Activated naive CD4-positive, alpha-beta T cell treated with anti-CD3 and anti-CD28 coated beads for 36 hours (primary cell): ENCODE measurements at regions of chr6 and their contacts with region 1.

Region 1: GRCh38 chr6:16684896-16685554 is 76.2 kb downstream of the ATXN1 start:
- DNase-seq: peak; percentile 97
- H3K4me3 Mint-ChIP-seq: peak overlapping the region; percentile 20
- H3K27ac Mint-ChIP-seq: peak overlapping the region; percentile 44
- H3K4me1 Mint-ChIP-seq: peaks cover 74% of the 10 kb centered on the region
- H3K27me3 Mint-ChIP-seq: no peaks in the 10 kb centered on the region

Region 2: DNA sequence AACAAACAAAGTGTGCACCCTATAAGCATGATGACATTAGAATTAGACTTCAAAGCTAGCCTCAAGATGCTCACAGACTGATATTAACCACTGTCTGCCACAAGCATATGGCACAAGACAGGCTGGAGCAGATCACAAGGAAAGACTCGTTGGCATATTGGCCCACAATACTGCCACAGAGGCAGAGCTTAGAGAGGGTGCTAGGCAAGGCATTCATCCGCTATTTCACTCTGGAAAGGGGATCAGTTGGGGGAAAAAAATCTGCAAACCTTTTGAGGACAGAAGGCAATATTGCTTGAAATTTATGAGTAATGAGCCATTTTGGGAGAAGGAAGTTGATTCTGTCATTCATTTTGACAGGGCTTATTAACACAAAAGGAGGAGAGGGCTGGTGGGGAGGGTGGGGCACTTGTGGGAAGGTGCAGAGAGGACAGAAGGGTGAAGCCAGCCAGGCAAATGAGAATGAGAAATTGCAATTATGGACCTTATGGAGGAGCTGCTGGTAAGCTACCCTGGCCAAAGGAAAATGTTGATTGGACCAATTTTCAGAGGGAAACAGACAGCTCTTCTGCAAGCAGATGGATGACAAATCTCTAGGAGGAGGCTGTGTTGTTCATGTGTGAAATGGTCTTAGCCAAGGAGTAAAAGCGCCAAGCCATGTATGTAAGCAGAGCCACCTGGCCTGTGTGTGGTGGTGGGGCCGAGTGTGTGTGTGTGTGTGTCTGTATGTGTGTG is 259.0 kb before region 1 on chr6:
- CTCF ChIA-PET with region 1: no interaction called
- intact Hi-C with region 1: no loop called
- DNase-seq: no peak
- H3K4me3 Mint-ChIP-seq: no peak overlapping the region
- H3K27ac Mint-ChIP-seq: no peak overlapping the region
- H3K4me1 Mint-ChIP-seq: peaks cover 29% of the 10 kb centered on the region
- H3K27me3 Mint-ChIP-seq: no peaks in the 10 kb centered on the region

Region 3: DNA sequence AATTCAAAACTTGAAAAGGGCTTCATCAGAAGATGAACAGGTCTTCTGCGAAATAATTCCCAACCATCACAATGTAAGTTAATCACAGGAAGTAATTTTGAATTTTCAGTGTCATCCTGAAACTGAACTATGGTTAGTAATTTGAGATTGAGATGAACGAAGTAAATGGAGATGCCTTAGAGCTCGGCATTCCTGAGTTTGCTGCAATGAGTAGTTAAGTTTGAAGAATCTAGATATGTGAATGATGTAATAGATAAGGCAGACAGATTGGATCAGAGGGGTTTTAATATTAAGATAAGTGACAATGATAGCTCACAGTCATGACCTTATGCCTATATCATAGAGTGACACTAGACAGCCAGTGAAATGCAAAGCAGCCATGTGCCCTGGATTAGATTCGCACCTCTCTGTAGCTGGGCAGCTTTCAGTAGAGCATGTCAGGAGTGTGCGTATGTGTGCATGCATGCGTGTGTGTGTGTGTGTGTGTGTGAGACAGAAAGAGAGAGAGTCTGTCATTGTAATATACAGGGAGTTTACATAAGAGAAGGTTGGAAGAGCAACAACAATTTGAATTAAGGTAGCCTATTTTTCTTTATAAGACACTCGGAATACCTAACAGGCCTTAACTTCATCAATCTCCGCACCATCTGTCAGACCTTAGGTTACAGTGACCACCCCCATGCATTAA is 213.7 kb before region 1 on chr6:
- CTCF ChIA-PET with region 1: no interaction called
- intact Hi-C with region 1: loop called (anchors 1 kb)
- DNase-seq: no peak
- H3K4me3 Mint-ChIP-seq: no peak overlapping the region
- H3K27ac Mint-ChIP-seq: peak overlapping the region; percentile 68
- H3K4me1 Mint-ChIP-seq: peaks cover 60% of the 10 kb centered on the region
- H3K27me3 Mint-ChIP-seq: no peaks in the 10 kb centered on the region

Region 4: DNA sequence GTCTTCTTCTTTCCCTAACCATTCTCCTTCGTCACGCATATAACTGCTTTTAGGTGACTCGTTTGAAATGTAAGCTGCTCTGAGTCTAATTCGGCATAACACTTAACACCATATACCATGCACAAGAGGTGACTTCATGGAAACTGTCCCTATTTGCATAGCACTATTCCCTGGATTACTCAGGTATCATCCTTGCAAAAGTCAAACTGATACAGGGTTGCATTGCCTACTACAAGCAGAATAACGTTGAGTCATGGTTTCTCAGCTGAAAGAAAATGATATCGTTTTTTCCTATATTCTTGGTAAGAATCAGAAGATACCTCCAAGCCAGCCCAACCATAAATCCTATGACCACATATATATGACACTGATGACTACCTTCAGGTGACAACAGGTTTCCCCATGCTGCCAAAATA is 151.3 kb before region 1 on chr6:
- CTCF ChIA-PET with region 1: no interaction called
- intact Hi-C with region 1: loop called (anchors 5 kb)
- DNase-seq: peak; percentile 22
- H3K4me3 Mint-ChIP-seq: no peak overlapping the region
- H3K27ac Mint-ChIP-seq: no peak overlapping the region
- H3K4me1 Mint-ChIP-seq: peaks cover 21% of the 10 kb centered on the region
- H3K27me3 Mint-ChIP-seq: no peaks in the 10 kb centered on the region

Region 5: GRCh38 chr6:16657768-16658167 is 27.3 kb before region 1 on chr6:
- CTCF ChIA-PET with region 1: interaction called, 4 read pairs
- intact Hi-C with region 1: loop called (anchors 1 kb)
- DNase-seq: peak; percentile 9
- H3K4me3 Mint-ChIP-seq: peak overlapping the region; percentile 2
- H3K27ac Mint-ChIP-seq: peak overlapping the region; percentile 32
- H3K4me1 Mint-ChIP-seq: peaks cover 43% of the 10 kb centered on the region
- H3K27me3 Mint-ChIP-seq: no peaks in the 10 kb centered on the region

Region 6: GRCh38 chr6:16698997-16699868 is 14.2 kb after region 1 on chr6:
- CTCF ChIA-PET with region 1: interaction called, 13 read pairs
- intact Hi-C with region 1: loop called (anchors 2 kb)
- DNase-seq: no peak
- H3K4me3 Mint-ChIP-seq: peak overlapping the region; percentile 65
- H3K27ac Mint-ChIP-seq: peak overlapping the region; percentile 61
- H3K4me1 Mint-ChIP-seq: peaks cover 64% of the 10 kb centered on the region
- H3K27me3 Mint-ChIP-seq: no peaks in the 10 kb centered on the region

Region 7: DNA sequence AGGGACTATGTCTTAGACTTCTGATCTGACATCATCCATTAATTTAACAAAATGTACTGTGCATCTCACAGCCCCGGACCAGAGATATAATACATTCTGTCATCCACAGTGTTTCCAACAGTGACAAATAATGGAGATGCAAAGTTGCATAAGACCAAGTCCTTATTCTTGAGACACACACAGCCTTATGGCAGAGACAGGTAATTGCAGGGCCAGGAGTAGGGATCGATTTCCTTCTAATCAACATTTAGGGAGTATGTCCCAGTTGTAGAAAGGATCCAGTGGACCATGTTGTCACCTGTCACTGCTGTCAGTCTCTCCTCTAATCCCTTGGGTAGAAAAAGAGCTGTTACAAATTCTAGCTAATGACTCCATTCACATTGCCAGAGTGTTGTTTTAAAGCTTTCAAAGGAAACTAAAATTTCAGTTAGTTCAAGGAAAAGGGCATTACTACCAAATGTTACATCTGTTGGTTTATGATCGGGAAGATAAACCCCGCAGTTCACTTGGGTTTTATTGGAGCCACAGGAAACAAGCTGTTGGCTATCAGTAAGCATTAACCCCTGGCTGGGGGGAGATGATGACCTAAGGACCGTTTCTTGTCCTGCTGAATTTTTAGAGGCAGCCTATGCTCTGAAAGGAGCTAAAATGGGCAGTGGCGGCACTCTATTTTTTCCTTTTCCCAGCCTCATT is 187.7 kb after region 1 on chr6:
- CTCF ChIA-PET with region 1: no interaction called
- intact Hi-C with region 1: no loop called
- DNase-seq: no peak
- H3K4me3 Mint-ChIP-seq: no peak overlapping the region
- H3K27ac Mint-ChIP-seq: no peak overlapping the region
- H3K4me1 Mint-ChIP-seq: no peaks in the 10 kb centered on the region
- H3K27me3 Mint-ChIP-seq: peaks cover 40% of the 10 kb centered on the region

Region 8: DNA sequence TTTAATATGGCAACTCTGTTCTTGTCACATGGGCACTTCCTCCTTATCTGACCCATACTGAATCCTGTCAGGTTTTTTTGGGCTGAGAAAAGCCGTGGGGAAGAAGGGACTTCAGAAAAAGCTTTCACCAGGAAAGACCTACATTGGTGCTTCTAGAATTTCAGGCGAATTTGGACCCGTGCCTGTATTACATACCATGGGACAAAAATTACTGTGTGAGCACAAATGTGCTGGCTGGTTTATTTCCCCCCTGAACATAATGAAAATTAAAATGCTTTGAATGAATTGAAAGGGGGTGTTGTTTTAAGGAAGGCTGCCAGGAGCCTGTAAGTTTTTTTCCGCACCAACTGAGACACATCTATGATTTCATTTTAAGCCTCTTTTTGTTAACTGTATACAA is 738.0 kb after region 1 on chr6:
- CTCF ChIA-PET with region 1: no interaction called
- intact Hi-C with region 1: no loop called
- DNase-seq: no peak
- H3K4me3 Mint-ChIP-seq: no peak overlapping the region
- H3K27ac Mint-ChIP-seq: no peak overlapping the region
- H3K4me1 Mint-ChIP-seq: no peaks in the 10 kb centered on the region
- H3K27me3 Mint-ChIP-seq: peaks cover 7% of the 10 kb centered on the region